ENCODE measurements at regions of chr18 and their contacts with region 1.

Region 1: GRCh38 chr18:3245853-3246634 is 1.6 kb upstream of the MYL12A start:
- DNase-seq: peak; percentile 74
- H3K27ac ChIP-seq: peak overlapping the region; percentile 94
- CTCF ChIP-seq: peak; percentile 93

Region 2: GRCh38 chr18:2932247-2933181 is 313.5 kb before region 1 on chr18:
- CTCF ChIA-PET with region 1: interaction called, 14 read pairs
- POLR2A ChIA-PET with region 1: no interaction called
- DNase-seq: peak; percentile 65
- H3K27ac ChIP-seq: no peak overlapping the region
- CTCF ChIP-seq: peak; percentile 73

Region 3: DNA sequence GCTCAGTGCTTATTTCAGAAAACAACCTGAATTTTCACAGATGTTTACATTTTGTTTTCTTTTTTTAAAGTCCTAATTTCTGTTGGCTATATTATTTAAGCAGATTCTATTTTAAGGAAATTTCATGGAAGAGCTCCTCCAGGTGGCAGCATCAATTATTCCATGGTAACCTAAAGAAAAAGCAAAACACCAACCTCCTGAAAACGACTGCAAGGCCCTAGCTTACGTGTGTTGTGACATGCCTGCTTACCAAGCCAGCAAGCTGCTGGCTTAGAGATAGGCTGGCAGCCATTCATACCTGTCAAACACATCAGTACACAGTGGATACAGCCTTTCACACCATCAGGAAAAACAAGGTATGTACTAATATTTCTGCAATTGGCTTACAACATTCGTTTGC is 298.0 kb before region 1 on chr18:
- CTCF ChIA-PET with region 1: interaction called, 17 read pairs
- POLR2A ChIA-PET with region 1: no interaction called
- DNase-seq: peak; percentile 53
- H3K27ac ChIP-seq: no peak overlapping the region
- CTCF ChIP-seq: peak; percentile 55

Region 4: DNA sequence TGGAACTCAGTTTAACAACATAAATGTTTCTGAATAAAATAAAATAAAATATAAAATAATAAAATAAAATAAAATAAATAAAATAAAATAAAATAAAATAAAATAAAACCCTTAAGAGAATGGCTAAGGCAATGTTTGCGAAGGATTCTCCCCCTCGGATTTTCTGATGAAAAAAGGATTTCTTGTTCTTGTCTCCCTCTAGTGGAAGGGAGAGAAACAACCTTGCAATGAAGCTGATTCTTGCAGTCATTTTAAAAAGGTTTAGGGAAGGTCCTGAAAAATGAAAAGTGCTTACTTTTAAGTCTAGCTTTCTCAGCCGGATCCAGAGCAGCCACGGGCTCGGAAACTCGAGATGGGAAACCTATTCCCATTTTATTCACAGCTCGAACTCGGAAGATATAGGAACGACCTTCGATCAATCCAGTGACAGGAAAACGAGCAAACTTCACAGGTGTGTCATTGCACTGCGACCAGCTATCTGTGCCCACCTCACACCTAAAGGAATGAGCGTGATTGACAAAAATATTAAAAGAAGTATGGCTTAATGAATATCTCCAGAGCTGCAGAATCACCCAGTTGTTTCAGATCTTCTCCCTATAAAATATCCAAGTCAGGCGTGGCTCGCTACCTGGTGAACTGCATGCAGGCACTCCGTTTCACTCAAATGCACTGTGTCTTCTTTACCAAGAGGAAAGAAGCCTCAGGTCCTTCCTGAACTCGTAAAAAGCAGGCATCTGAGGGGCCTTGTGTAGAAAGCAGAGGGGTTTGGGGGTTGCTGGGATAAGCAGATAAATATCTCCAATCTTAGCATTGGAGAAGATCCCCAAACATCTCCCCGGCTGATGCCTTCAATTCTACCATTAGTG is 94.4 kb before region 1 on chr18:
- CTCF ChIA-PET with region 1: interaction called, 13 read pairs
- POLR2A ChIA-PET with region 1: no interaction called
- DNase-seq: peak; percentile 45
- H3K27ac ChIP-seq: no peak overlapping the region
- CTCF ChIP-seq: peak; percentile 72

Region 5: DNA sequence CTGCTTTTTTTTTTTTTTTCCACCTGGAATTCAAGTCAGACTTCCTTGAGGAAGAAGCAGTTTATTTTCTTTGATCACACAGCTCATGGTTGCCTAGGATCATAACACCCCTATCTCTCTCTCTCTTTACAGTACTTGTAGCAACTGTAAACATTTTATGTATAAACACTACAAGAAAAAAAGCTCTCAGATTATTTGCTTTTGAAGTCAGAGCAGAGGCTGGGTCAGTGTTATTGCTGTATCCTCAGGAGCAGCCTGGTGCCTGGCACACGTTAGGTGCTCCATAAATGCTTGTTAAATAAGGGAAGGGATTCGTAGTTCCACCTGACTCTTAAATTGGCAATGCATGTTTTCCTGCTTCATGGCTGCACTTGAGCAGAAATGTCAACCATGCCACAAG is 425.1 kb after region 1 on chr18:
- CTCF ChIA-PET with region 1: no interaction called
- POLR2A ChIA-PET with region 1: no interaction called
- DNase-seq: no peak
- H3K27ac ChIP-seq: no peak overlapping the region
- CTCF ChIP-seq: no peak